CD8-positive, alpha-beta T cell (primary cell): ENCODE measurements at regions of chr18 and their contacts with region 1.

Region 1: DNA sequence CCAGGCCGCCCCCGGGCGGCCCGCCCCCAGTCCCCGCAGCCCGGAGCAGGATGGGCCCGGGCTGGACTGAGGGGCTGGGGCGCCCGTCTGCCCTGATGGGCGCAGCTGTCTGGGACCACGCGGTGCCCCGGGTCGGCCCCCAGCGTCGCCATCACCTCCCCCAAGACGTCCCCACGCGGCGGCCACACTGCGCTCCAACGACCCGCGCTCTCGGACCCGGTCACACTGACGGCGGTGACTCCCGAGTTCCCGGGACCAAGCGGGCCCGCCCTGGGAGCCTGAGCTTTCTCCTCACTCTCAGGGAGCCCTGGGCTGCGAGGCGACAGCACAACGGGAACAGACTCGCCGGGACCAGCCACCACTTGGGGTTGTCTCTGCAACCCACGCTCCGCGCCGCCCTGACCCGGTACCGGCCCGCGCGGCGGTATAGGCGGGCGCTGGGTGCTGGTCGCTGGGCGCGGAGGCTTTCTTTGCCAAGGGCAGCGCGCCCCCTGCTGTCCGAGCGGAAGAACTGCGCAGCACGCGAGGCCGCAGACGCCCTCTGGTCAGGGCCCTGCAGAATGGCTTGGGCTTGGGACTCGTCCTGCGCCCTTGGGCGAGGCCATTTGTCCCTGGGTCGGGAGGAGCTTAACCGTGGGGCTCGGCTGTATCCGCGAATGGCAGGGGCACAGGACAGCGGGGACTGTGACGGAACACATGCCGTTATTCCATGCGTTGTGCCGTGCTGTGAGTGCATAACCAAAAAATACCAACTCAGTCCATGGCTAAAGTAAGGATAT is 54.8 kb upstream of the ANKRD62 start:
- DNase-seq: peak; percentile 41 to 87 (median 72)
- ATAC-seq: peak; percentile 92
- H3K4me3 ChIP-seq: peak overlapping the region; percentile 48 to 50
- H3K4me3 Mint-ChIP-seq: peak overlapping the region; percentile 74
- H3K27ac ChIP-seq: no peak overlapping the region
- H3K27ac Mint-ChIP-seq: no peak overlapping the region
- H3K4me1 ChIP-seq: no peaks in the 10 kb centered on the region
- H3K4me1 Mint-ChIP-seq: peaks cover 4% of the 10 kb centered on the region
- H3K27me3 ChIP-seq: peaks cover 2 to 3% of the 10 kb centered on the region in 2 experiments
- H3K27me3 Mint-ChIP-seq: peaks cover 16% of the 10 kb centered on the region
- CTCF ChIP-seq: peak; percentile 97

Region 2: DNA sequence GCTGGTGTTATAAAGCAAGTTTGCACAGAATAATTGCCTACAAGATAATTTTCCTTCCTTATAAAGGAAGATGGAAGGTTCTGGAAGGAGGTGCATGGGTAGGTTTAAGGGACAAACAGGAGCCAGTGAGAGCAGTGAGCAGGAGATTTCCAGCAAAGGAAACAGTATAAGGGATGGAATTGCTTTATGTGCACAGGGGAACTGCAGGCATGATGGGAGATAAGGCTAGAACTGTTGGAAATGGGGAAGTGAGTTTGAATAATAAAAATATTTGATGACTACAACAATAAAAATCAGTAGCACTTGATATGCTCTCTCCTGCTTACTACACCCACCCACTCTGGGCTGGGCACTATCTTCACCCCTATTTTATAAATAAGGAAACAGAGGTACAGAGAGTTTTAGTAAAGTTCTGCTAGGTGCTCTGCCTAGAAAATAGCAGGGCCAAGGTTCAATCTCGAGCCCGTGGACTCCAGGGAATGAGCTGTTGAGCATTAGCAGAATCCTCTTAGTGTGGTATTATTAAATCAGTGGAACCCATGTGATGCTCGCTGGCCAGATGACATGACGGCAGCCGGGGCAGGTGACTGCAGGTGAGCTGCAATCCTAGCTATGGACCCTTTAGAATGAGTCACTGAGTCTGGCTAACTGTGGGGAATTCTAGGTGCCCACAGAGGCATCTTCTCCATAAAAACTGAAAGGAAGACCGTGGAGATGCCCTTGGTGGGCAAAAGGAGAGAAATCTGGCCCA is 1192.0 kb before region 1 on chr18:
- CTCF ChIA-PET with region 1: interaction called, 4 read pairs
- POLR2A ChIA-PET with region 1: no interaction called
- intact Hi-C with region 1: loop called in 1 of 2 experiments (anchors 5 kb)
- DNase-seq: no peak
- ATAC-seq: no peak
- H3K4me3 ChIP-seq: no peak overlapping the region
- H3K4me3 Mint-ChIP-seq: no peak overlapping the region
- H3K27ac ChIP-seq: no peak overlapping the region
- H3K27ac Mint-ChIP-seq: no peak overlapping the region
- H3K4me1 ChIP-seq: no peaks in the 10 kb centered on the region
- H3K4me1 Mint-ChIP-seq: no peaks in the 10 kb centered on the region
- H3K27me3 ChIP-seq: no peaks in the 10 kb centered on the region
- H3K27me3 Mint-ChIP-seq: no peaks in the 10 kb centered on the region
- CTCF ChIP-seq: no peak

Region 3: DNA sequence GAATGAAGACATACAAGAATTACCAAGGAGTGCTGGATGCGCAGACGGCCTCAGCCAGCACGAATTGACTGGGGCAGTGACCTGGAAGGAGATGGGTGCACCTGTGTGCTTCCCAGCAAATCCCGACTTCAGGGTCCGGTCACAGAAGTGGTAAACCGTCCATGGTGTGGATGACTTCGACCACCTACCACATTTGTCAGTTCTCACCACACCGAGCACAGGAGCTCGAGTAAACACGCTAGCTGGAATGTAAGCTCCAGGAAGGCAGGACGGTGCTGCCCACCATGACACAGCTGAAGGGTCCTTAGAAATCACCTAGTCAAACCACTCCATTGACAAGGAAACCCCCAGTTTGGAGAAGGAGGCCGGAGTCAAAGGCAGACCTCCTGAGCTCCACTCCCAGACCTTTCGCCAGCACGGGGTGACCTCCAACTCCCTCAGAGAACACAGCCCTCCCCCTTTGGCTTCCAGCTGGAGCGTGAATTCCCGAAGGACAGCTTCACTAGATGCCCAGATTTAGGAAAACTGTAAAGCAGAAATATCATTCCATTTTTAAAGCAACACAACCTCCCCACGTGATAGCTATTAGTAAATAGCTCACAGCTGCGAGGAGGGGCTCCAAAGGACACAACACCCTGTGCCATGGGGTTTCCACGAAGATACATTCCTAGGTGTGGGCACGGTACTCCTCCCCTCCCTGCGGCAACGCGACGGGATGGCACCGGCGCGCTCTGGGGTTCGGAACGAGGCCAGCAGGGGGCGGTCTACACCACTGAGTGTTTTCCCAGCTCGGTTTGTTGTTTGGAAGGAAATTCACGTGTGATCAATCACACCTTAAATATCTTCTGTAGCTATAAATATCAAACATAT is 383.9 kb before region 1 on chr18:
- CTCF ChIA-PET with region 1: interaction called, 3 read pairs
- POLR2A ChIA-PET with region 1: no interaction called
- intact Hi-C with region 1: loop called (anchors 2 to 5 kb)
- DNase-seq: peak in 5 of 9 experiments; percentile 3 to 42 (median 25)
- ATAC-seq: no peak
- H3K4me3 ChIP-seq: no peak overlapping the region
- H3K4me3 Mint-ChIP-seq: no peak overlapping the region
- H3K27ac ChIP-seq: no peak overlapping the region
- H3K27ac Mint-ChIP-seq: no peak overlapping the region
- H3K4me1 ChIP-seq: no peaks in the 10 kb centered on the region
- H3K4me1 Mint-ChIP-seq: peaks cover 2% of the 10 kb centered on the region
- H3K27me3 ChIP-seq: no peaks in the 10 kb centered on the region
- H3K27me3 Mint-ChIP-seq: peaks cover 47% of the 10 kb centered on the region
- CTCF ChIP-seq: peak; percentile 41

Region 4: DNA sequence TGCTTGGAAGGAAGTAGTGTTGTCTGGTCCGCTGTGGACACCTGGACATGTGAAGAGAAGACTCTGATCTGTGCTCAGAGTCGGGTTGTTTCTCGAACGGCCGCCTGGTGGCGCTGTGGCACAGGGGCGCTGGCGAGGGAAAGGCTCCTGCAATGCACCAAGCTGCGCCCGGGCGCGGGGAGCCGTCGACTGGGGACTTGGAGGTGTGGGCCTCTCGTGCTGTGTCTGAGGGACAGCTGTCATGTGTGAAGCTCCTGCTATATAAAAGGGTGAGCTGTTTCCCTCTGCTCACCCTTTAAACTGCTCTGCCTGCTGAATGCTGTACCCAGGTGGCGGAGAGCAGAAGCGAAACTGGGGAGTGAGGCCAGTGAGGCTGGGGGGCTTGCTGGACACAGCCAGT is 305.8 kb before region 1 on chr18:
- CTCF ChIA-PET with region 1: interaction called, 11 read pairs
- POLR2A ChIA-PET with region 1: no interaction called
- intact Hi-C with region 1: loop called in 1 of 2 experiments (anchors 1 kb)
- DNase-seq: peak; percentile 32 to 75 (median 64)
- ATAC-seq: peak; percentile 57
- H3K4me3 ChIP-seq: no peak overlapping the region
- H3K4me3 Mint-ChIP-seq: peak overlapping the region; percentile 29
- H3K27ac ChIP-seq: no peak overlapping the region
- H3K27ac Mint-ChIP-seq: no peak overlapping the region
- H3K4me1 ChIP-seq: no peaks in the 10 kb centered on the region
- H3K4me1 Mint-ChIP-seq: peaks cover 4% of the 10 kb centered on the region
- H3K27me3 ChIP-seq: peaks cover 0 to 3% of the 10 kb centered on the region in 2 experiments
- H3K27me3 Mint-ChIP-seq: peaks cover 34% of the 10 kb centered on the region
- CTCF ChIP-seq: peak; percentile 72

Region 5: DNA sequence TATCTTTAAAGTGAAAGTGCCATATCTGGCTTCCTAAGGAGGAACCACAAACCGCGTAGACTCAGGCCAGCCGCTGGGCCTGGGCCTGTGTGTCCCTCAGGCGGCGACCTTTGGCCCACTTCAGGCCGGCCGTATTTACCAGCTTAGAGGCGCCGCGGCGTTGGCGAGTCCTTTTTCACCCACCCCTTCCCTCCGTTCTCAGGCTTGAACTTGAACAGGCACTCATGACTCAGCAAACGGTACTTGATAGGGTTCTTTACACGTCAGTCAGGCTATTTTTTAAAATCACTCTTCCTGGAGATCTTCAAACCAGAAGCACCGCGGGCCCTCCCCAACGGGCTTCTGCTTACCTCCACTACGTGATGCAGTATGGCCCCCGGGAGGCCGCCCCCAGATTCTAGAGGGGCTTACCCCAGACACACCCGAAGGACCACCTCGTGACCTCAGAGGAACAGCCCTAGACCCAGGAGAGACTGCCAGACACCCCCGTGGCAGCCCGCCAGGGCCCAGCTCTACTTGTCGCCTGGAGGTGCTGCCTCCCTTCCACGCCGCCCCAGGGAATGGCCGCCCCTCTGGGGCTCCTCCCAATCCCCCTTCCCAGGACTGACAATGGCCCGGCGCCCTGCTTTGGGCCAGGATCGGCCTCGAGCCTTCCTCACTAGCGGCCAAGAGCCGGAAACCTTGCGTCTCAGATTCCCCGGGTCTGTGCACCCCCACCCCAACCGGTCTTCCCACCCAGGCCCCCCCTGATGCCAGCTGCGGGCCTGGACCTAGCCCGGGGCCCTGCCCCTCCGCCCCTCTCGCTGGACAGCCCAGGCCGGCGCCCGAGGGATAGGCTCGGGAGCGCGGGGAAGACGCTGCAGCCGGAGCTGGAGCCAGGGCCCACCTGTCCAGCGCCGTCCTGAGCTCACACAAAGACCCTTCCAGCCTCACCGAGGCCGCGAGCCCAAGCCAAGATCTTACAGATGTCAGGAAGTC is 91.3 kb before region 1 on chr18:
- CTCF ChIA-PET with region 1: interaction called, 102 read pairs
- POLR2A ChIA-PET with region 1: no interaction called
- intact Hi-C with region 1: no loop called
- DNase-seq: peak; percentile 9 to 84 (median 53)
- ATAC-seq: peak; percentile 86
- H3K4me3 ChIP-seq: peak overlapping the region; percentile 57 to 73
- H3K4me3 Mint-ChIP-seq: peak overlapping the region; percentile 86
- H3K27ac ChIP-seq: peak overlapping the region; percentile 36 to 63
- H3K27ac Mint-ChIP-seq: peak overlapping the region; percentile 72
- H3K4me1 ChIP-seq: peaks cover 4% of the 10 kb centered on the region
- H3K4me1 Mint-ChIP-seq: peaks cover 11% of the 10 kb centered on the region
- H3K27me3 ChIP-seq: no peaks in the 10 kb centered on the region
- H3K27me3 Mint-ChIP-seq: no peaks in the 10 kb centered on the region
- CTCF ChIP-seq: no peak

Region 6: DNA sequence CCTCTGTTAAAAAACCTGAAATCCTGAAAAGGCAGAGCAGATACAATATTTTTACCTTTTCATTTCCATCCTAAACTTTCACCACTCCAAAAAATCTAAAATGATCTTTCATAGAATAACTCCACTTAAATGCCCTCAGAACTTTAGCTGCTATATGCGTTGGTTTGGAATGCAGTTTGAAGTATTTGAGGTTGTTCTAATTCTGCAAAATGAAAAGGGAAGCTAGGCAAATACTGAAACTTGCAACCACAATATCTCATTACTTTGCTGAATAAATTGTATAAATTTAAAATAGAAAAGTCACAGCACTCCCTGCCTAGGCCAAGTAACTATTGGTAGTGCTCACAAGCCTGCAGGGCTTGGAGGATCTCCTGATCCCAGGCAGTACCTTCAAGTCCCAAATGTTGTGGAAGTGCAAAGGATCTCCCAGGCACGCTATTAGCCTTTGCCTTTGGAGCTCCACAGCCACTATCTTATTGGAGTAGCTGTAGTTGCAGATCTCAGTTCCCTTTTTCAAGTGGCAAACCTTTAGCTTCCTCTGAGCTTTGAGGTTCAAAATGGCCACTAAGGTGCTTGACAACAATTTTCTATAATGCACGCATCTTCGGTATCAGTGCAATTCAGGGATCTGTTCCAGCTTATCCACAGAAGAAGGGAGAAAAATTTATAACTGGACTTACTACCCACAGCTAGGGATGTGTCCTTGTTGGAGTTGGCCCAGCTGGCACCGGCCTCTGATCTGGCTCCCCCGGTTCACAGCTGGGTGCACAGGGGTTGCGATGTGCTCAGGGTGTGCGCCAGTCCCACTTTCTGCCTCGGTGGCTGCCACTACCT is 11.4 kb after region 1 on chr18:
- CTCF ChIA-PET with region 1: interaction called, 12 read pairs
- POLR2A ChIA-PET with region 1: no interaction called
- intact Hi-C with region 1: no loop called
- DNase-seq: no peak
- ATAC-seq: no peak
- H3K4me3 ChIP-seq: no peak overlapping the region
- H3K4me3 Mint-ChIP-seq: no peak overlapping the region
- H3K27ac ChIP-seq: no peak overlapping the region
- H3K27ac Mint-ChIP-seq: no peak overlapping the region
- H3K4me1 ChIP-seq: no peaks in the 10 kb centered on the region
- H3K4me1 Mint-ChIP-seq: no peaks in the 10 kb centered on the region
- H3K27me3 ChIP-seq: no peaks in the 10 kb centered on the region
- H3K27me3 Mint-ChIP-seq: peaks cover 3% of the 10 kb centered on the region
- CTCF ChIP-seq: no peak